ENCODE measurements at regions of chr16 and their contacts with region 1.

Region 1: DNA sequence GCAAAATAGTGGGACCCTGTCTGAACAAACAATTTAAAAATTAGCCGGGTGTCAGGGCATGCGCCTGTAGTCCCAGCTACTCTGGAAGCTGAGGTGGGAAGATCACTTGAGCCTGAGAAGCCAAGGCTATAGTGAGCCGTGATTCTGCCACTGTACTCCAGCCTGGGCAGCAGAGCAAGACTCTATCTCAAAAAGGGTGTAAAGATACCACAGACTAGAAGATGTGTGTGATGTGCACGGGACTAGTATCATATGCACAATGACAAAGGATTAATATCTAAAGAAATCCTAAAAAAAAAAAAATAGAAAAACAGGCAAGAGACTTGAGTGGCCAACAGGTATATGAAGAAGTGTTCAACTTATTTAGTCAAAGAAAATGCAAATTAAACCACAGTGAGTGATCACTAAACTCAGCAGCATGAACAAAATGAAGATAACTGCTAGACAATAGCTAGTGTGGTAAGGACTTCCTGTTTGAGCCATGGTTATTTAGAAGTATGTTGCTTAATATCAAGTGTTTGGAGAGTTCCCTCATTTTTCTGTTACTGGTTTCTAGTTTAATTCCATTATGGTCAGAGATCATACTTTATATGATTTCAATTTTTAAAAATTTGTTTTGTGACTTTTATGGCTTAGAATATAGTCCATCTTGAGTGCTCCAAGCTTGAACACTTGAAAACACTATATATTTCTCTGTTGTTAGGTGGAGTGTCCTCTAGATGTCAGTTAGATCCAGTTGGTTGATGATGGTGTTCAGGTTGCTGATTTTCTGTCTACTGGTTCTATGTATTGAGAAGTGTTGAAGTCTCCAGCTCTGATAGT is 14.7 kb upstream of the SLX4 start:
- DNase-seq: no peak
- ATAC-seq: no peak
- H3K4me3 ChIP-seq: no peak overlapping the region
- H3K27ac ChIP-seq: peak overlapping the region in 1 of 12 donors; percentile 17
- H3K4me1 ChIP-seq: peaks cover 0 to 21% (median 0%) of the 10 kb centered on the region in 12 donors
- H3K27me3 ChIP-seq: no peaks in the 10 kb centered on the region
- CTCF ChIP-seq: no peak
- POLR2A ChIP-seq: no peak

Region 2: GRCh38 chr16:3520413-3520812 is 105.7 kb before region 1 on chr16:
- intact Hi-C with region 1: loop called in 1 of 10 experiments (anchors 10 kb)
- DNase-seq: no peak
- ATAC-seq: no peak
- H3K4me3 ChIP-seq: no peak overlapping the region
- H3K27ac ChIP-seq: peak overlapping the region in 1 of 12 donors; percentile 79
- H3K4me1 ChIP-seq: no peaks in the 10 kb centered on the region
- H3K27me3 ChIP-seq: no peaks in the 10 kb centered on the region
- CTCF ChIP-seq: no peak
- POLR2A ChIP-seq: no peak